Heart left ventricle (tissue), 16 donors: ENCODE measurements at regions of chr17 and their contacts with region 1.

Region 1: GRCh38 chr17:40443583-40444327 is 505 bp downstream of the IGFBP4 start:
- DNase-seq: peak; percentile 80 to 92 (median 83)
- ATAC-seq: peak in 3 of 4 donors; percentile 48 to 58 (median 50)
- H3K4me3 ChIP-seq: peak overlapping the region; percentile 46 to 92 (median 74)
- H3K27ac ChIP-seq: peak overlapping the region; percentile 86 to 98 (median 96)
- H3K4me1 ChIP-seq: peaks cover 0 to 57% (median 39%) of the 10 kb centered on the region in 12 donors
- H3K27me3 ChIP-seq: no peaks in the 10 kb centered on the region
- CTCF ChIP-seq: peak in 10 of 12 donors; percentile 12 to 56 (median 40)
- POLR2A ChIP-seq: no peak

Region 2: DNA sequence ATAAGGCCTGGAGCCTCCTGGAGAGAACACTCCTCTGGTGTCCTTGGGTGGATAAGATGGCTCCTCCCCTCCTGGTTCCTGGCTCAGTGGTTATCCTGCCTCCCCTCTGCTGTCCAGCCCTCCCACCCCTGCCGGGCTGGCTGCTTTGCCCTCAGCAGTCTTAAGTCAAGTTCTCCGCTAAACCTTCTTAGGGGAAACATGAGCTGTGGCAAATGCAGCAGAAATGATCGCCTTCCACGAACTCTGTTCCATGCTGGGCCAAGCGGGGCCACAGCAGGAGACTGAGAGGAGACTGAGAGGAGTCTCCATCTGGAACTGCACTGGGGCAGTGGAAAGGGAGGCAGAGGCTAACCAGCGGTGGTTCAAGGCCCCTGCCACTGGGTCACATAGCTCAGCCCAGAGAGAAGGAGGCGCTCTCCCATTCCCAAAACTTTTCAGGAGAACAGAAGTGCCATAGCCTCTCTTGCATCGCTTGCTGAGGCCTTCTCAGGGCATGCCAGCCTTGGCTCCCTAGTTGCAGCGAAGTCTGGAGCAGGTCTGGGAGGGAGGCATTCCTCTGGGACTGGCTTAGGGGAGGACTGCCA is 30.8 kb after region 1 on chr17:
- intact Hi-C with region 1: loop called (anchors 1 to 5 kb)
- DNase-seq: peak in 1 of 5 donors; percentile 17
- ATAC-seq: no peak
- H3K4me3 ChIP-seq: no peak overlapping the region
- H3K27ac ChIP-seq: peak overlapping the region in 1 of 12 donors; percentile 79
- H3K4me1 ChIP-seq: peaks cover 0 to 16% (median 7%) of the 10 kb centered on the region in 12 donors
- H3K27me3 ChIP-seq: no peaks in the 10 kb centered on the region
- CTCF ChIP-seq: no peak
- POLR2A ChIP-seq: no peak

Region 3: GRCh38 chr17:40480501-40481003 is 36.8 kb after region 1 on chr17:
- intact Hi-C with region 1: loop called (anchors 1 to 5 kb)
- DNase-seq: peak in 1 of 5 donors; percentile 51
- ATAC-seq: peak in 3 of 4 donors; percentile 20 to 60 (median 30)
- H3K4me3 ChIP-seq: no peak overlapping the region
- H3K27ac ChIP-seq: peak overlapping the region in 1 of 12 donors; percentile 86
- H3K4me1 ChIP-seq: peaks cover 0 to 31% (median 5%) of the 10 kb centered on the region in 12 donors
- H3K27me3 ChIP-seq: no peaks in the 10 kb centered on the region
- CTCF ChIP-seq: no peak
- POLR2A ChIP-seq: no peak

Region 4: DNA sequence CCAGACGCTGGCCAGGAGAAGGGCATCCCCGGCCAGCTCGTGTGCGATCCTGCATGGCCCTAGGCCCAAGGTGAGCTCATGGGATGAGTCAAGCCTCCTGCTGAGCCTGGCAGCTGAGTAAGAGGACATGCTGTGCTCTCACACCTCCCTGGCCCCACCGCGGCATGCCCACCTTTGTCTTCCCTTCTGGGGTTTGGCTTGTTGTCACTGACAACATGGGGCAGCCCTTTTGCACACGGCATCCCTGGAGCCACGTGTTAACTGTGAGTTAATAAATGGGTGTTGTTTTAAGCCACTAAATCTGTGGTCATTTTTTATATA is 66.5 kb after region 1 on chr17:
- intact Hi-C with region 1: no loop called
- DNase-seq: peak in 1 of 5 donors; percentile 28
- ATAC-seq: peak in 3 of 4 donors; percentile 23 to 52 (median 28)
- H3K4me3 ChIP-seq: no peak overlapping the region
- H3K27ac ChIP-seq: no peak overlapping the region
- H3K4me1 ChIP-seq: peaks cover 0 to 10% (median 1%) of the 10 kb centered on the region in 12 donors
- H3K27me3 ChIP-seq: peaks cover 0 to 5% (median 0%) of the 10 kb centered on the region in 9 donors
- CTCF ChIP-seq: no peak
- POLR2A ChIP-seq: no peak

Region 5: DNA sequence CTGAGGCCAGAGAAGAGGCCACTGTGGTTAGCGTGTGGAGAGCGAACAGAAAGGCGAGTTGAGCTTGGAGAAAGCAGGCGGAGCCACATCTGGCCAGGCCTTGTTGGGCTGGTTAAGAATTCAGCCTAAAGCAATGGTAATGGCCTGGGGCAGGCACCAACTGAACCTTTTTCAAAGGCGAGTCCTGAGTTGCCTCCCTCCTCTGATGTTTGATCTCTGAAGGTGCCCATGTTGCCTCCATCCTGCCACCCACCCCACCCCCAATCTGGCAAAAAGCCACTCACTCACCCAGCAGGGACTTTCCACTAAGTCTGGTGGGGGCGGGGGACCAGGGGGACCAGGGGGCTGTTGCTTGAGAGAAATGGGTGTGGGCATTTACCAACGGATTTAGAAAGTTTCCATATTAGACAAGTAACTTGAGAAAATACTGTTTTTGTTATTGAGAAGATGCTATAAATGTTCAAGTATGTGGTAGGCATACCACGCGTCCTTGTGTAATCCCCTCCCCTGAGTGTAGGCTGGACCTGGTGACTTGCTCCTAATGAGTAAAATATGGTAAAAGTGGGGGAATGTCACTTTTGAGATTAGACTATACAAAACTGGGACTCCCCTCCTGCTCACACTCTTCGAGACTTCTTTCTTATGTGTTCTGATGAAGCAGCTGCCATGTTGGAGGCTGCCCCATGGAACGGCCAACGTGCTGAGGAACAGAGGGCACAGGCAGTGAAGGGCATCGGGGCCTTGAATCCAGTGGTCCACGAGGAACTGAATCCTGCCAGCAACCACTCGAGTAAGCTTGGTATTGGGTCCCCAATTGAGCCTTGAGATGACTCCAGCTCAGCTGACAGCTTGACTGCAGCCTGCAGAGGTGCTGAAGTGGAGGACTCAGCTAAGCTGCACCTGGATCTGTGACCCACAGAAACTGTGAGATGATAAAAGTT is 87.6 kb after region 1 on chr17:
- intact Hi-C with region 1: loop called (anchors 1 to 5 kb)
- DNase-seq: peak in 1 of 5 donors; percentile 19
- ATAC-seq: no peak
- H3K4me3 ChIP-seq: no peak overlapping the region
- H3K27ac ChIP-seq: peak overlapping the region in 6 of 12 donors; percentile 22 to 84 (median 75)
- H3K4me1 ChIP-seq: peaks cover 0 to 48% (median 26%) of the 10 kb centered on the region in 12 donors
- H3K27me3 ChIP-seq: no peaks in the 10 kb centered on the region
- CTCF ChIP-seq: no peak
- POLR2A ChIP-seq: no peak